ENCODE measurements at regions of chr3 and their contacts with region 1.

Region 1: GRCh38 chr3:107429320-107430181 is 52.3 kb downstream of the CCDC54 start:
- DNase-seq: peak; percentile 66 to 89 (median 82)
- H3K4me3 ChIP-seq: peak overlapping the region; percentile 57 to 93 (median 83)
- H3K27ac ChIP-seq: peak overlapping the region; percentile 90 to 100 (median 98)
- H3K27me3 ChIP-seq: no peaks in the 10 kb centered on the region
- CTCF ChIP-seq: peak; percentile 71 to 93 (median 85)

Region 2: GRCh38 chr3:107206141-107206540 is 223.4 kb before region 1 on chr3:
- intact Hi-C with region 1: loop called (anchors 10 kb)
- DNase-seq: peak in 1 of 10 donors; percentile 35
- H3K4me3 ChIP-seq: no peak overlapping the region
- H3K27ac ChIP-seq: peak overlapping the region in 57 of 59 donors; percentile 11 to 95 (median 89)
- H3K27me3 ChIP-seq: no peaks in the 10 kb centered on the region
- CTCF ChIP-seq: peak; percentile 35 to 93 (median 74)

Region 3: GRCh38 chr3:107264888-107265287 is 164.7 kb before region 1 on chr3:
- intact Hi-C with region 1: loop called in 1 of 2 experiments (anchors 5 kb)
- DNase-seq: no peak
- H3K4me3 ChIP-seq: peak overlapping the region in 21 of 59 donors; percentile 2 to 45 (median 18)
- H3K27ac ChIP-seq: peak overlapping the region in 57 of 59 donors; percentile 4 to 90 (median 71)
- H3K27me3 ChIP-seq: no peaks in the 10 kb centered on the region
- CTCF ChIP-seq: no peak

Region 4: GRCh38 chr3:107271787-107272387 is 157.7 kb before region 1 on chr3:
- intact Hi-C with region 1: loop called (anchors 2 to 5 kb)
- DNase-seq: no peak
- H3K4me3 ChIP-seq: peak overlapping the region in 11 of 59 donors; percentile 4 to 39 (median 18)
- H3K27ac ChIP-seq: peak overlapping the region in 58 of 59 donors; percentile 1 to 90 (median 72)
- H3K27me3 ChIP-seq: no peaks in the 10 kb centered on the region
- CTCF ChIP-seq: peak; percentile 63 to 94 (median 82)

Region 5: DNA sequence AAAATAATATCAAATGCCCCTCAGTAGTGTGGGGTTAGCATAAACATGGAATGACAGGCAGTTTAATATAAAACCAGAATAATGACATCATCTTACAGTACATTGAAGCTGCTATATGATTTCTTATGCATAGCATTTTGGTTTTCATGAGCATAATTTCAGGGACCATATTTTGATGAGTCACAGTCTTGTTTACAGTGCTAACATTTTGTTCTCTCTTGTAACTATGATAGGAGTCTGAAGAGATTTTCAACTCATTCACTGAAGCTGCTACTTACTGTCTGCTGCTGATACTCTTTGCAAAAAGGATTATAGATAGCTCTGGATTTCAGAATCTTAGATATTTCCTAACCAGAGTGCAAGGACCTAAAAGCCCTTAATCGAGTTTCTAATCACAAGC is 144.9 kb before region 1 on chr3:
- intact Hi-C with region 1: loop called in 1 of 2 experiments (anchors 5 kb)
- DNase-seq: no peak
- H3K4me3 ChIP-seq: no peak overlapping the region
- H3K27ac ChIP-seq: peak overlapping the region in 42 of 59 donors; percentile 1 to 78 (median 42)
- H3K27me3 ChIP-seq: no peaks in the 10 kb centered on the region
- CTCF ChIP-seq: no peak

Region 6: DNA sequence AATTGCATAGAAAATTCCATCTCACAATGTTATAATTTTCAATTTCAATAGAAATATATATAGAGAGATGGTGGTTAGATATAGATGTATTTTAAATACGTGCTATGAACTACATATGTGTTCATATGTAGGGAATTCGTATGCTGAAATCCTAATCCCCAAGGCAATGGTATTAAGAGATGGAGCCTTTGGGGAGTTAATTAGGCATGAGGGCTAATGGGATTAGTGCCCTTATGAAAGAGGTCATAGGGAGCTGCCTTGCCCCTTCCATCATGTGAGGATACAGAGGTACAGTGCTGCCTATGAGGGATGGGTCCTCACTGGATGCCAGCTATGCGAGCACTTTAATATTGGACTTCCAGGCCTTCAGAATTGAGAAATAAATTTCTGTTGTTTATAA is 132.0 kb before region 1 on chr3:
- intact Hi-C with region 1: no loop called
- DNase-seq: no peak
- H3K4me3 ChIP-seq: no peak overlapping the region
- H3K27ac ChIP-seq: no peak overlapping the region
- H3K27me3 ChIP-seq: no peaks in the 10 kb centered on the region
- CTCF ChIP-seq: no peak

Region 7: DNA sequence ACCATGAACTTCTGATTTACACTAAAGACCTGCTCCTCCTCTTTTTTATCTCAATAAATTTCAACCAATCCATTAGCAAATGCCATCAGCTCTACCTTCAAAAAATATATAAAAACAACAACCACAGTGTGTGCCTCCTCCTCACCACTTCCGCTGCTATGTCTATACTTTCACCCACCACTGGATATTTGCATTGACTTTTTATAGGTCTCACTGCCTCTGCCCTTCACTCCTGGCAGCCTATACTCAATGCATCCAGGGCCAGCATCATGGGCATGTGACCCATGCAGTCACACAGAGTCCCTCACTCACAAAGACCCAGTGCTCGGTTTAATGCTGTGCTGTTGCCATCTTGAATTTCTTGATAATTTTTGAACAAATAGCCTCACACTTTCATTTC is 105.8 kb before region 1 on chr3:
- intact Hi-C with region 1: no loop called
- DNase-seq: no peak
- H3K4me3 ChIP-seq: no peak overlapping the region
- H3K27ac ChIP-seq: no peak overlapping the region
- H3K27me3 ChIP-seq: no peaks in the 10 kb centered on the region
- CTCF ChIP-seq: no peak

Region 8: DNA sequence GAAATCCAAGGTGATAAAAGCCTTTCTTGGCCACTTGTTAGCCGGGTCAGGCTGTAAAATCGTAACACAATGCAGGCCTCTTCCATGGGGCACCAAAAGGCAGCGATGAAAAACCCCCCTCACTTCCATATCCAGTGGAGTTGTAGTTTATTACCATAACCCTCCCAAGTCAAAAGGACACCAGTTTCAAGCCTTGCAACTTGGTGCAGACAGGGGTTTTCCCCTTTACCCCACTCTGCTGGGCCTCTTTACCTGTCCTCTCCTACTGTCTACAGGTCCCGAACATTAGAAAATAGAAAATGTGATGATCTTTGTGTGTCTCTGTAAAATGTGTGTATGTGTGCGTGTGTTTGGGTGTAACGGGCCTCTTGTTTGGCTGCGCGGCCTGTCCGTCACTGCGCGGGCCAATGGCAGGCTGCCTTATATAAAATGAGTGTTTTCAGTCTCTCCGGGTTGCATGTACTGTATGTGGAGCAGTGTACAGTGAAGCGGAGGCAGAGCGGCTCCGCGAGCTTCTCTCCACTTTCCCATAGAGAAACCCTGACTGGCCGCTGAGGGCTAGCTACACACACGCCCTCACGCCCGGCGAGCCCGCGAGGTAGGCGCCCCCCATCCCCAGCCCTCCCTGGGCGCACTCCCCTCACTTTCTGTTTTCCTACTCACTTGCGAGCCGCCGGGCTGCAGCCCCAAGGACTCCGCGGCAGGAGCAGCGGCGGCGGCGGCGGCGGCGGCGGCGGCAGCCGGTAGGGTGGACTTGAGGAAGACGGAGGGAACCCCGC is 93.1 kb after region 1 on chr3 and contains the start of gene BBX:
- intact Hi-C with region 1: loop called (anchors 1 to 2 kb)
- DNase-seq: peak; percentile 89 to 99 (median 94)
- H3K4me3 ChIP-seq: peak within 1 kb of the TSS; percentile 65 to 94 (median 84)
- H3K27ac ChIP-seq: peak within 1 kb of the TSS; percentile 81 to 99 (median 96)
- H3K27me3 ChIP-seq: no peaks in the 10 kb centered on the region
- CTCF ChIP-seq: peak in 16 of 56 donors; percentile 3 to 44 (median 18)
- total RNA-seq, gene BBX: 42.2 to 147 (median 75.3) TPM

Region 9: GRCh38 chr3:107660306-107660976 is 230.9 kb after region 1 on chr3:
- intact Hi-C with region 1: loop called in 1 of 2 experiments (anchors 10 kb)
- DNase-seq: no peak
- H3K4me3 ChIP-seq: peak overlapping the region in 10 of 59 donors; percentile 1 to 24 (median 12)
- H3K27ac ChIP-seq: no peak overlapping the region
- H3K27me3 ChIP-seq: no peaks in the 10 kb centered on the region
- CTCF ChIP-seq: peak; percentile 49 to 84 (median 70)

Region 10: DNA sequence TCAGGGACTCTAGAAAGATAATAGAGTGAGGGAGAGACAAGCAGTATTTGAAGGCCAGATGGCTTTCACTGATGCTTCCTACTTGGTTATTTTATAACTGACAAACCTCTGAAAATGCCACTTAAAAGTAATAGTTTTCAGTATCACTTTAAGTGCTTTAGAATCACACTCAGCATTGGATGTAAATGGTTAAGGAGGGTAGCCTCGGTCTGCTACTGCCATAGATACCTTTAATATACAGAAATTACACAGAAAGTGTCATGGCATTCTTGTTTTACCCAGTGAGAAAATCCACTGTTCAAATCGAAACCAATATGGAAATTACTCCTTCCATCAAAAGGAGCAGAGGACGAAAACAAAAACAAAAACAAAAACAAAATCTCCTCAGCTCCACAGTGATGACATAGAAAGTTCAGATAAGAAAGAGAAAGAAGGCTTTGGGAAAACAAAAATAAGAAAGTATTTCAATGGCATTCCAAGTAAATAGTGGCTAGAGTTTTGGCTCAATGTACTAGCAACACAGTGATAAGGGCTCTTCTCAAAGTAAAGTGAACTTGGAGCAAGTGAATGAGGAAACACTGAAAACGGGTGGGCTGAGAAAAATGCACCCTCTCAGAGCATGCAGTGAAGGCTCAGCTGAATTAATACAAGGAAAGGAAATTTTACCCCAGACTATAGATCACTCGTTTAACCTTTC is 704.5 kb after region 1 on chr3:
- intact Hi-C with region 1: no loop called
- DNase-seq: no peak
- H3K4me3 ChIP-seq: peak overlapping the region in 26 of 59 donors; percentile 4 to 51 (median 24)
- H3K27ac ChIP-seq: no peak overlapping the region
- H3K27me3 ChIP-seq: no peaks in the 10 kb centered on the region
- CTCF ChIP-seq: no peak